ENCODE measurements at regions of chr5 and their contacts with region 1.

Region 1: GRCh38 chr5:177311723-177312648 is at the start of gene MXD3:
- DNase-seq: peak; percentile 95 to 98
- H3K4me3 ChIP-seq: peak within 1 kb of the TSS; percentile 52 to 75 (median 67)
- H3K27ac ChIP-seq: peak within 1 kb of the TSS; percentile 89
- H3K4me1 ChIP-seq: peaks cover 0 to 19% (median 14%) of the 10 kb centered on the region in 4 experiments; a peak in 6 of 7 replicates
- H3K27me3 ChIP-seq: no peaks in the 10 kb centered on the region
- CTCF ChIP-seq: no peak
- EP300 ChIP-seq: no peak
- POLR2A ChIP-seq: peak in 1 of 2 experiments; percentile 60; a peak in 2 of 3 replicates
- RAD21 ChIP-seq: no peak
- total RNA-seq, gene MXD3: 7.7 and 10.3 TPM in 2 replicates

Region 2: GRCh38 chr5:177176175-177176711 is 135.7 kb before region 1 on chr5:
- CTCF ChIA-PET with region 1: no interaction called
- POLR2A ChIA-PET with region 1: no interaction called
- DNase-seq: no peak
- H3K4me3 ChIP-seq: no peak overlapping the region
- H3K27ac ChIP-seq: no peak overlapping the region
- H3K4me1 ChIP-seq: no peaks in the 10 kb centered on the region
- H3K27me3 ChIP-seq: no peaks in the 10 kb centered on the region
- CTCF ChIP-seq: no peak
- EP300 ChIP-seq: no peak
- POLR2A ChIP-seq: no peak
- RAD21 ChIP-seq: no peak

Region 3: GRCh38 chr5:177327539-177328522 is 15.8 kb after region 1 on chr5:
- CTCF ChIA-PET with region 1: interaction called, 100 read pairs
- POLR2A ChIA-PET with region 1: interaction called, 4 read pairs
- DNase-seq: no peak
- H3K4me3 ChIP-seq: no peak overlapping the region
- H3K27ac ChIP-seq: no peak overlapping the region
- H3K4me1 ChIP-seq: peaks cover 0 to 7% (median 2%) of the 10 kb centered on the region in 4 experiments; a peak in 5 of 7 replicates
- H3K27me3 ChIP-seq: no peaks in the 10 kb centered on the region
- CTCF ChIP-seq: no peak
- EP300 ChIP-seq: no peak
- POLR2A ChIP-seq: no peak
- RAD21 ChIP-seq: no peak

Region 4: DNA sequence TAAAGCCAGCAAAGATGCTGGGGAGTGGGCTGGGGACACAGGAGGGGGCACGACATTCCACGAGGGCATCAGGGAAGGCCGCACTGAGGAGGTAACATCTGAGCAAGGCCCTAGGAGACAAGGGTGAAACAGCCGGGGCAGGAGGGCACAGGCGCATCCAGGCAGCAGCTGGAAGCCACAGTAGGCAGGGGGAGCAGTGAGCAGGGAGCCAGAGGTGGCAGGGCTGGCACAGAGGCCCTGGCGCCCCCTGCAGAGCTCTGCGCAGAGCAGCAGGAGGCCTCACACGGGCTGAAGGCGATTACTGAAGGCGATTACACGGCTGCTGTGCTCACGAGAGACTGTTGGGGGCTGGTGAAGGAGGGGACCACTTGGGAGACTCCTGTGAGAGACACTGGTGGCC is 24.1 kb after region 1 on chr5:
- CTCF ChIA-PET with region 1: interaction called, 100 read pairs
- POLR2A ChIA-PET with region 1: interaction called, 5 read pairs
- DNase-seq: no peak
- H3K4me3 ChIP-seq: no peak overlapping the region
- H3K27ac ChIP-seq: peak overlapping the region; percentile 64; the same call in 1 of the 2 replicates
- H3K4me1 ChIP-seq: peaks cover 0 to 5% (median 3%) of the 10 kb centered on the region in 4 experiments; a peak in 4 of 7 replicates
- H3K27me3 ChIP-seq: no peaks in the 10 kb centered on the region
- CTCF ChIP-seq: peak in 2 of 3 experiments; percentile 39 to 74; a peak in 3 of 4 replicates
- EP300 ChIP-seq: no peak
- POLR2A ChIP-seq: no peak
- RAD21 ChIP-seq: peak; percentile 13 to 27; a peak in 1 of 4 replicates

Region 5: GRCh38 chr5:177362610-177363507 is 50.9 kb after region 1 on chr5:
- CTCF ChIA-PET with region 1: interaction called, 251 read pairs
- POLR2A ChIA-PET with region 1: interaction called, 26 read pairs
- DNase-seq: peak in 1 of 2 experiments; percentile 89
- H3K4me3 ChIP-seq: peak overlapping the region; percentile 43 to 69 (median 48)
- H3K27ac ChIP-seq: no peak overlapping the region
- H3K4me1 ChIP-seq: peaks cover 2 to 27% (median 22%) of the 10 kb centered on the region in 4 experiments
- H3K27me3 ChIP-seq: peaks cover 0 to 11% (median 9%) of the 10 kb centered on the region in 4 experiments; a peak in 4 of 7 replicates
- CTCF ChIP-seq: no peak
- EP300 ChIP-seq: no peak
- POLR2A ChIP-seq: 0 out of 3 replicates have a peak, but pooled peaks of 1 of the 2 experiments have one; percentile 16
- RAD21 ChIP-seq: no peak

Region 6: GRCh38 chr5:177370488-177371119 is 58.6 kb after region 1 on chr5:
- CTCF ChIA-PET with region 1: interaction called, 251 read pairs
- POLR2A ChIA-PET with region 1: interaction called, 26 read pairs
- DNase-seq: peak; percentile 93 to 99
- H3K4me3 ChIP-seq: peak overlapping the region; percentile 23 to 63 (median 58); a peak in 6 of 8 replicates
- H3K27ac ChIP-seq: 0 out of 2 replicates have a peak overlapping the region, but pooled peaks have one; percentile 60
- H3K4me1 ChIP-seq: peaks cover 8 to 36% (median 31%) of the 10 kb centered on the region in 4 experiments
- H3K27me3 ChIP-seq: peaks cover 1 to 14% (median 12%) of the 10 kb centered on the region in 4 experiments; a peak in 4 of 7 replicates
- CTCF ChIP-seq: peak in 2 of 3 experiments; percentile 79 to 98; a peak in 3 of 4 replicates
- EP300 ChIP-seq: no peak
- POLR2A ChIP-seq: 0 out of 3 replicates have a peak, but pooled peaks of 1 of the 2 experiments have one; percentile 16
- RAD21 ChIP-seq: peak; percentile 66 to 75

Region 7: GRCh38 chr5:177382423-177383029 is 70.5 kb after region 1 on chr5:
- CTCF ChIA-PET with region 1: interaction called, 23 read pairs
- POLR2A ChIA-PET with region 1: interaction called, 3 read pairs
- DNase-seq: peak in 1 of 2 experiments; percentile 64
- H3K4me3 ChIP-seq: no peak overlapping the region
- H3K27ac ChIP-seq: no peak overlapping the region
- H3K4me1 ChIP-seq: peaks cover 0 to 12% (median 2%) of the 10 kb centered on the region in 4 experiments; a peak in 4 of 7 replicates
- H3K27me3 ChIP-seq: peaks cover 0 to 2% (median under 1%) of the 10 kb centered on the region in 4 experiments; a peak in 3 of 7 replicates
- CTCF ChIP-seq: peak in 2 of 3 experiments; percentile 37 to 59; a peak in 3 of 4 replicates
- EP300 ChIP-seq: no peak
- POLR2A ChIP-seq: no peak
- RAD21 ChIP-seq: peak; percentile 22 to 41; a peak in 2 of 4 replicates